ENCODE measurements at regions of chr17 and their contacts with region 1.

Region 1: DNA sequence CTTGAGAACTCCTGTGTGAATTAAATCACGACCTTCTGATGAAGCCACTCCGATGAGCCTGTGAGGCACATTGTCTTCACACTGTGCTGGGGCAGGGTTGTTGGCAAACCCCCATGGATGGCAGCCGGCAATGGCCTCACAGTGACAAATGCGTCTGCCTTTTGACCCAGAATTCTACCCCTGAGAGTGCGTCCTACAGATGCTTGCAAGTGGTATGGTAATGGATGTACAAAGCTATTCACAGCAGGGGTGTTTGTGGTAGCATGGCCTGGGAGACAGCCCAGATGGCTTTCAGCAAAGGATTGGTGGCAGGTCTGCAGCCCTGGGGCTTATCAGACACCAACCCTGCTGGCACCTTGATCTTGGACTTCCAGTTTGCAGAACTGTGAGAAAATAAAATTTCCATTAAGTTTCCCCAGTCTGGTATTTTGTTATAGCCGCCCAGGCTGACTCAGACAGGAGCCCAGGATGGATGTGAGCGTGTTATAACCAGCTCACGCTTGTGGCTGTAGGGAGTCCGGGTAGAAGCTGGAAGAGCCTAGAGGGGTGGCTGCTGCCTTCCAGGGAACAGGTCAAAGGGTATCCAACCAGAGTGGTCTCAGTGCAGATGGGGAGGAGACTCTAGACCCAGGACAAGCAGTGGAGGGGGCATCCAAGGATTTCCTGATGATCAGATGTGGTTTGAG is 10.1 kb downstream of the AFMID start:
- DNase-seq: no peak
- H3K4me3 ChIP-seq: no peak overlapping the region
- H3K27ac ChIP-seq: peak overlapping the region; percentile 29; the same call in 1 of the 2 replicates
- H3K4me1 ChIP-seq: peaks cover 0 to 11% (median 4%) of the 10 kb centered on the region in 4 experiments; a peak in 5 of 7 replicates
- H3K27me3 ChIP-seq: no peaks in the 10 kb centered on the region
- CTCF ChIP-seq: no peak
- EP300 ChIP-seq: no peak
- POLR2A ChIP-seq: no peak
- RAD21 ChIP-seq: no peak

Region 2: DNA sequence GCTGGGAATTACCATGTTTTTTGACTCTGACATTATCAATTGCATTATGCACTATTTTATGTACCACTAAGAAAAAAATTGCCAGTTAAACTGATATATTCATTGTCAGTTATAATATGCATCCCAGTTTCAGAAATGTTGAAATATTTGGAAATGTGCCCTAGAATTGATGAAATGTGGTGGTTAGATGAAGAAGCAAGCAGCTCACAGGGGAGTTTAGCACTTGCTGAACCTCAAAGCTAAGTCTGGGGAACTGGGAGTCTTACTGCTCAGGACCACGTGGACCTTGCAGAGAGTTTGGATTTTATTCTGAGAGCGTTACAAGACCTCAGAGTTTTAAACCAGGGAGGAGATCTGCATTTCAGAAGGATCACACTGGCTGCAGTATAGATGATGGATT is 170.9 kb before region 1 on chr17:
- CTCF ChIA-PET with region 1: no interaction called
- POLR2A ChIA-PET with region 1: no interaction called
- DNase-seq: no peak
- H3K4me3 ChIP-seq: no peak overlapping the region
- H3K27ac ChIP-seq: no peak overlapping the region
- H3K4me1 ChIP-seq: no peaks in the 10 kb centered on the region
- H3K27me3 ChIP-seq: peaks cover 0 to 1% (median 0%) of the 10 kb centered on the region in 4 experiments; a peak in 1 of 7 replicates
- CTCF ChIP-seq: no peak
- EP300 ChIP-seq: no peak
- POLR2A ChIP-seq: no peak
- RAD21 ChIP-seq: no peak

Region 3: GRCh38 chr17:78168903-78169793 is 28.1 kb before region 1 on chr17:
- CTCF ChIA-PET with region 1: interaction called, 11 read pairs
- POLR2A ChIA-PET with region 1: interaction called, 11 read pairs
- DNase-seq: peak in 1 of 2 experiments; percentile 80
- H3K4me3 ChIP-seq: peak overlapping the region; percentile 57 to 87 (median 65)
- H3K27ac ChIP-seq: no peak overlapping the region
- H3K4me1 ChIP-seq: peaks cover 5 to 39% (median 19%) of the 10 kb centered on the region in 4 experiments
- H3K27me3 ChIP-seq: no peaks in the 10 kb centered on the region
- CTCF ChIP-seq: no peak
- EP300 ChIP-seq: no peak
- POLR2A ChIP-seq: no peak
- RAD21 ChIP-seq: no peak

Region 4: GRCh38 chr17:78214706-78215061 is 17.4 kb after region 1 on chr17:
- CTCF ChIA-PET with region 1: interaction called, 9 read pairs
- POLR2A ChIA-PET with region 1: interaction called, 13 read pairs
- DNase-seq: no peak
- H3K4me3 ChIP-seq: peak overlapping the region; percentile 85 to 94 (median 90)
- H3K27ac ChIP-seq: no peak overlapping the region
- H3K4me1 ChIP-seq: peaks cover 0 to 8% (median 4%) of the 10 kb centered on the region in 4 experiments; a peak in 4 of 7 replicates
- H3K27me3 ChIP-seq: no peaks in the 10 kb centered on the region
- CTCF ChIP-seq: no peak
- EP300 ChIP-seq: no peak
- POLR2A ChIP-seq: no peak
- RAD21 ChIP-seq: no peak